GM10248 (cell line): ENCODE measurements at regions of chr14 and their contacts with region 1.

Region 1: DNA sequence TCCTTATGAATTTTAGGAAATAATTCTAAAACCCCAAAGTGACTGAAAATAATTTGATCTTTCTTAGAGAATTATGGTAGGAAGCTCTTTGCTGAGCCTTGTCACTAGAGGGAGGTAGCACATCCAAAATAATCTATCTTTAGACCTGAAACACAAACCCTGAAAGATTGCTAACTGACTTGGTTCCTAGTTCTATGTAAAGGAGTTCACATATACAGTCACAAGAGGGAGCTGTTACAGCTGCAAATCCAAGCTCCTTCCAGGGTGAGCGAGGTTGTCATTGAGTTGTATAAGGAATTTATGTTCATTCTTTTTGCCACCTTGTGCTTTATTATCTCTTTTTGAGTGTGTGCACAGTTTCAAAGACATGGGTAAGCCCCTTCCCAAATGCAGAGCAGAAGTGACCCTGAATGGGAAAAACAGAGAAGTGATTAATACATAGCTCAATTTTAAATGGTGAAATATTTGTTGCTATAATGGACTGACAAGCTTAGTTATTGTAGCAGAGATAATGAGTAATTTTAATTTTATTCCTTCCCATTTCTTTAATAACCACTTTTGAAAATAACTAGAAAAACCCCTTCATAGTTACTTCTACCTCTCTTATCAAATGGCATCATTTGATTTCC is 387.9 kb downstream of the DAD1 start:
- DNase-seq: peak; percentile 22
- CTCF ChIP-seq: peak; percentile 56

Region 2: DNA sequence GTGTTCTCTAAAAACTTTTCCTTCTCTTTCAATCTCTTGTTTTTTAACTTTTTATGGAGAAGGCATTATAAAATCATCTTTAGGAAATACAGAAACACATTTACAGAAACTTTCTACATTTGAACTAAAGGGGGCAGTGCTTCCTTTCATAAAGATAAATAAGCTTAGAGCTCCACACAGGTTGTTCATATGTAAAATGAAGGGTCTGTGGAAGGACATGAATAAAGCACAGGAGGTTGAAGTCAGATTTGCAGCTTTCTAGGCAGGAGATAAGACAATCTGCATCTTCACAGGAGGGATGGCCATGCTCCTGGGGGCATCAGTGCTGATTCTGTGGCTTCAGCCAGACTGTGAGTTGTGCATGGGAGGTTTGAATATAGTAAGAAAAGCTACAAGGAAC is 38.0 kb before region 1 on chr14:
- CTCF ChIA-PET with region 1: interaction called, 14 read pairs
- POLR2A ChIA-PET with region 1: no interaction called
- DNase-seq: no peak
- CTCF ChIP-seq: peak; percentile 29

Region 3: DNA sequence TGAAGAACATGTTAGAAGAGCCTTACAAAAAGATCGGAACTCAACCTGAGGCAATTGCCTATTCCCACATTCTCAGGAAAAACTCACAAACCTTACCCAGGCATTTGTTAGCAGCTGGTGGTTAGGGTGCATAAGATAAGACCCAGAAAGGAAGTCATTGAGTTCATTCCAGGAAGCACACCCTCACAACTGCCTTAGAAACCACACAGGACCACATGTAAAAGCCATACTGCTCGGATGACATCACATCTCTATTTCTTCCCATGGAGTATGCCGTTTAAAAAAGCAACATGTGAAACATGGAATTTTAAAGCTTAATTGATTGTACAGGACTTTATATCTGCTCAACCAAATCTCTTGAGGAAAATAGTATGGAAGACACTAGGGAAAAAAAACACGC is 23.2 kb before region 1 on chr14:
- CTCF ChIA-PET with region 1: interaction called, 26 read pairs
- POLR2A ChIA-PET with region 1: no interaction called
- DNase-seq: no peak
- CTCF ChIP-seq: no peak

Region 4: DNA sequence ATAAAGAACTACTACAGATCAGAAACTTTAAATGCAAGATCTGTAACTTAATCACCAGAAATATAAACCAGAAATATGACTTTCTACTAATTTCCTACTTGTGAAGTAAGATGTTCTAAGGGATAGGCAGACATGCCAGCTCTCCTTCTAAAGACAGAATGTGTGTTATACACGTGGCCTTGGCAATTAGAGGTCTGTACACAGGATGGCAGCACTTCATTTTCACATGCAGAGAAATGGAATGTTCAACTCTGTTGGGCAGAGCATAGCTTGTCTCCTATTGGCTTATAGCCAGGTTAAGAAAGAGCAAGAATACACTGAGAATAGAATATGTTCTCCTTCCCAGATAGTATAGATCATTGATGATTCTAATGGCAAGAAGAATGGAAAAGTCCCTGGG is 15.9 kb before region 1 on chr14:
- CTCF ChIA-PET with region 1: interaction called, 26 read pairs
- POLR2A ChIA-PET with region 1: no interaction called
- DNase-seq: no peak
- CTCF ChIP-seq: no peak

Region 5: GRCh38 chr14:22220427-22220826 is 19.3 kb after region 1 on chr14:
- CTCF ChIA-PET with region 1: interaction called, 15 read pairs
- POLR2A ChIA-PET with region 1: no interaction called
- DNase-seq: no peak
- CTCF ChIP-seq: no peak

Region 6: GRCh38 chr14:22226381-22226780 is 25.3 kb after region 1 on chr14:
- CTCF ChIA-PET with region 1: interaction called, 11 read pairs
- POLR2A ChIA-PET with region 1: no interaction called
- DNase-seq: no peak
- CTCF ChIP-seq: peak; percentile 23

Region 7: DNA sequence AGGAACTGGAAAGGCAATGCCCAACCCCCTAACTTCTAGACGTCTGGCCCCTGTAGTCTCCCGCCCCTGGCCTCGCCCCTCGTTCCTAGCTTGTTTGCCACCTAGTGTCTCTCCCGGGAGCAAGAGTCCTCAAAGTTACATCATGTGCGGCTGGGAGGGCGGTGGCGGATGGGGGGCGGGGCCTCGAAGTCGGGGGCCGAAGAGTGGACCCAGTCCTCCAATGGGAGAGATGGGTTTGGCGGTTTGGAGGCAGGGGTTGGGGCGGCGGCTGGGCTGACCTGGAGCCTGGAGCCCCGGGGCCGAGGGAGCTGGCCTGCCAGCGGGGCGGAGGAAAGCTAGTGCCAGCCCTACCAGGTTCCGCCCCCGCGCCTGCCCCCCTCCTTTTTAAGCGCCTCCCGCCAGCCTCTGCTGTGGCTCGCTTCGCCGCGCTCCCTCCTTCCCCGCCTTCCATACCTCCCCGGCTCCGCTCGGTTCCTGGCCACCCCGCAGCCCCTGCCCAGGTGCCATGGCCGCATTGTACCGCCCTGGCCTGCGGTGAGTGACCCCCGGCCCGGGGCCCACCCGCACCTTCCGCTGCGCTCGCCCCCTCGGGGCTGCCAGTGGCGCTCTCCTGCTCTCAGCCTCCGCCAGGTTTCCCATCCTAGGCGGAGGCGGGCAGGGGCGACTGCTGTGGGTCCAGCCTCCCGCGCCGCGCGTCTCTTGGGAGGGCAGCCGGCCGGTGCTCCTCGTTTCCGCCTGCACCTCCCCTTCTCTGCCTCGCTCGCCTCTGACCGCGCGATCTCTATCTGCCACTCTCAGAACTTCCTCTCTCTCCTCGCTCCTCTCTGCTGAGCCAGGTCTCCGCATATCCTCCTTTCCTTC is 1893.0 kb after region 1 on chr14 and contains the start of gene PCK2:
- CTCF ChIA-PET with region 1: no interaction called
- POLR2A ChIA-PET with region 1: no interaction called
- DNase-seq: peak; percentile 91
- CTCF ChIP-seq: no peak